Thyroid gland (tissue), 4 donors: ENCODE measurements at regions of chr3 and their contacts with region 1.

Region 1: DNA sequence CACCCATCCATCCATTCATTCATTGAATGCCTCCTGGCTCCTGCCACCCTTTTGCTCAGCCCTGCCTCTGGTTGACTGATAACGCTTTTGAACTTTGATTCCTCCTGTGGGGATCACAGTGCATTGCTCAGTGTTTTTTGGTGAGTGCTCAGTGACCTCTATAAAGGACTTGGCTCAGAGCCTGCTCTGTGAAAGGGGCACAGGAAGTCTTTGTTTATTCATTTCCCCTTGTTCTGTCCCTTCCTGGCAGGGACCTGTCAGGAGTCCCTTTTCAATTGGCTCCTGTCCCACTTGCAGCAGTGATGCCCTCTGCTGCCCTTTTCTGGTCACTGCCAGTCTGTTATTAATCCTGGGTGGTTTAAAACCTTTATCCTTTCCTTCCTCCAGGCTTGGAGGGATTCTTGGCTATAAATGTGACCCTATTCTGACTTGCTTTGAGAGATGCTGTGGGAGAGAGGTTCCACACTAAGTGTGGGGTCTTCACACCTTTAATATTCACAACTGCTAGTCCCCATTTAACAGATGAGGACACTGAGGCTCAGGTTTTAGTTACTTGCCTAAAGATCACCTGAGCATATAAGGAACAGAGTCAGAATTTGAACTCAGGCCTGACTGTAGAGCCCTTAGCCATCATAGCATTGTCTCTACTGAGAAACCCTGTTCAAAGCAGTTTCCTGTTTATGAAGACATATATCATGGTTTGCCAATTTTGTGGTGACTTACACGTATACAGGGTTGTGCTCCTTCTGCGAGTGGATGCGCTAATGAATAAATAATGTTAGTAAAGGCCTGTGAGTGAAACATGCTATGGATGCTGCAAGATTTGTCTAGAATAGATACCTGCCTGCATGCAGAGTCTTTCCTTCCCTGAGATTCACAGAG is 23.2 kb upstream of the TATDN2 start:
- DNase-seq: peak; percentile 83 to 85
- H3K4me3 ChIP-seq: no peak overlapping the region
- H3K27ac ChIP-seq: no peak overlapping the region
- H3K4me1 ChIP-seq: peaks cover 4 to 14% of the 10 kb centered on the region in 2 donors
- H3K27me3 ChIP-seq: no peaks in the 10 kb centered on the region
- CTCF ChIP-seq: peak; percentile 49 to 98 (median 90)
- POLR2A ChIP-seq: no peak

Region 2: DNA sequence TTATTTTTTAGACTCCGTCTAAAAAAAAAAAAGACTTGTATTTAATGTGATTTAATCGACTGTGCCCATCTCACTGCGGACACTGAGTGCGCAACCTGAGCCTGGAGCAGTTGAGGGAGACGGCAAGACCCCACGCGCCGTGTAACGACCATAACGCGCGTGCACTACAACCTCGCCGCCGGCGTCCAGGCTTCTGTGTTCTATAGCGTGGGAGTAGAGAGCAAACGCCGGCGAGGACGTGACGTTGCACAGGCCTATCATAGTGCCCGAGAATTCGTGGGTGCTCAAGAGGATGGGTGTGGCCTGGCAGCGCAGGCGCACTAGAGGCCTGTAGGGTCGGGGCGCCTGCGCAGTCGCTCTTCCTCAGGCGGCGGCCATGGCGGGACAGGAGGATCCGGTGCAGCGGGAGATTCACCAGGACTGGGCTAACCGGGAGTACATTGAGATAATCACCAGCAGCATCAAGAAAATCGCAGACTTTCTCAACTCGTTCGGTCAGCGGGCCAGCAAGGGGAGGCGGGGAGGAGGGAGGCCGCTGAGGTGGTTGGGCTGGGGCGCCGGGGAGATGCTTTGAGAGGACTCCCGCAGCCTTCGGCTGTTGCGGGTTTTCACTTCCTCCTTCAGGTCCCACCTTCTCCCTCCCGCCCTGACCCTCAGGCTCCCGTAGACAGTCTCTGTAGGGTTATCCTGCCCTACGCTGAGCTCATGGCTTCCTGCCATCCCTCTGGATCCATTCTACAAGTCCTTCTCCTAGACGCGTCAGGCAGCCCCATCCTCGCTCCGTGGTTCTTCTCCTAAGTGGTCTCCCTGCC is 109.5 kb before region 1 on chr3 and contains the start of gene BRK1:
- intact Hi-C with region 1: loop called (anchors 10 kb)
- DNase-seq: peak; percentile 96 to 97
- H3K4me3 ChIP-seq: peak within 1 kb of the TSS; percentile 12 to 90 (median 84)
- H3K27ac ChIP-seq: peak within 1 kb of the TSS; percentile 72 to 78 (median 72)
- H3K4me1 ChIP-seq: peaks cover 9 to 11% of the 10 kb centered on the region in 2 donors
- H3K27me3 ChIP-seq: no peaks in the 10 kb centered on the region
- CTCF ChIP-seq: peak in 1 of 6 experiments; percentile 11
- POLR2A ChIP-seq: peak; percentile 48 to 94
- total RNA-seq, gene BRK1: 80.6 to 158 (median 108) TPM

Region 3: GRCh38 chr3:10164546-10165393 is 60.3 kb before region 1 on chr3 and contains the start of gene IRAK2:
- intact Hi-C with region 1: loop called (anchors 2 kb)
- DNase-seq: peak; percentile 73 to 77
- H3K4me3 ChIP-seq: peak within 1 kb of the TSS; percentile 69 to 86 (median 72)
- H3K27ac ChIP-seq: peak within 1 kb of the TSS; percentile 33 to 77 (median 73)
- H3K4me1 ChIP-seq: peaks cover 5 to 6% of the 10 kb centered on the region in 2 donors
- H3K27me3 ChIP-seq: no peaks in the 10 kb centered on the region
- CTCF ChIP-seq: peak; percentile 42 to 99 (median 92)
- POLR2A ChIP-seq: peak in 1 of 2 donors; percentile 70
- total RNA-seq, gene IRAK2: 5.0 to 9.1 (median 7.4) TPM